ENCODE measurements at regions of chr2 and their contacts with region 1.

Region 1: GRCh38 chr2:1550658-1551316 is 137.5 kb downstream of the TPO start:
- DNase-seq: peak in 1 of 2 experiments; percentile 91
- H3K4me3 ChIP-seq: no peak overlapping the region
- H3K27ac ChIP-seq: no peak overlapping the region
- H3K4me1 ChIP-seq: no peaks in the 10 kb centered on the region
- H3K27me3 ChIP-seq: peaks cover 0 to 4% (median 3%) of the 10 kb centered on the region in 4 experiments; a peak in 3 of 7 replicates
- CTCF ChIP-seq: peak; percentile 85 to 94 (median 91)
- EP300 ChIP-seq: no peak
- POLR2A ChIP-seq: no peak
- RAD21 ChIP-seq: peak; percentile 71 to 81

Region 2: DNA sequence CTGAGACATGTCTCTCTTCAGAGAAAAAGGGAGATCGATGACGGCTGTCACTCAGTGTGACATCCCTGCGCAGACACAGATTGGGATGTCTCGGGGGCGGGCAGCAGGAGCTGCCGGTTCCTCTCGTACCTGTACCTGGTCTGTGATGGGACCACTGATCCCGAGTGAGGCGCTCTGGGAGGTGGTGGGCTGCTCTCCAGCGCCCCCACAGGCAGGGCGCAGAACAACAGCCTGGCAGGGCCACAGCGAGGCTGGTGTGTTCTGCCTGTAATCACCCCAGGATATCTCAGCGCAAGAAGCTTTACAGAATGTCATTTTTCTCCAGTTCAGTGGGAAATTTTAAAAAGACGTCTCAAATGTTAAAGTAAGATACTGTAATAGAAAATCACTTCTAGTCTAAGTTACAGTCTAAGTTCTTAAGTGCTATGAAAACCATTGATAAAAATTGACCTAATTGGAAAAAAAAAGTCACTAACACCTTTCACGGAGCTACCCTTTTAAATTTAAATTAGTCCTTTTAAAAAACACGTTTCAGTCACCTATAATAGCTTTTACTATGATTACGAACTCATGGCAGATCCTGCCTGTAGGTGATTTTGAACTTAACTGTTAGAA is 410.3 kb before region 1 on chr2:
- CTCF ChIA-PET with region 1: interaction called, 12 read pairs
- POLR2A ChIA-PET with region 1: no interaction called
- DNase-seq: peak; percentile 51 to 93
- H3K4me3 ChIP-seq: no peak overlapping the region
- H3K27ac ChIP-seq: no peak overlapping the region
- H3K4me1 ChIP-seq: no peaks in the 10 kb centered on the region
- H3K27me3 ChIP-seq: no peaks in the 10 kb centered on the region
- CTCF ChIP-seq: peak; percentile 92 to 97 (median 94)
- EP300 ChIP-seq: no peak
- POLR2A ChIP-seq: no peak
- RAD21 ChIP-seq: peak; percentile 69 to 71

Region 3: GRCh38 chr2:1246239-1246638 is 304.5 kb before region 1 on chr2:
- CTCF ChIA-PET with region 1: interaction called, 14 read pairs
- POLR2A ChIA-PET with region 1: no interaction called
- DNase-seq: no peak
- H3K4me3 ChIP-seq: no peak overlapping the region
- H3K27ac ChIP-seq: no peak overlapping the region
- H3K4me1 ChIP-seq: no peaks in the 10 kb centered on the region
- H3K27me3 ChIP-seq: no peaks in the 10 kb centered on the region
- CTCF ChIP-seq: peak; percentile 51 to 63 (median 56)
- EP300 ChIP-seq: no peak
- POLR2A ChIP-seq: no peak
- RAD21 ChIP-seq: peak; percentile 53 to 62

Region 4: DNA sequence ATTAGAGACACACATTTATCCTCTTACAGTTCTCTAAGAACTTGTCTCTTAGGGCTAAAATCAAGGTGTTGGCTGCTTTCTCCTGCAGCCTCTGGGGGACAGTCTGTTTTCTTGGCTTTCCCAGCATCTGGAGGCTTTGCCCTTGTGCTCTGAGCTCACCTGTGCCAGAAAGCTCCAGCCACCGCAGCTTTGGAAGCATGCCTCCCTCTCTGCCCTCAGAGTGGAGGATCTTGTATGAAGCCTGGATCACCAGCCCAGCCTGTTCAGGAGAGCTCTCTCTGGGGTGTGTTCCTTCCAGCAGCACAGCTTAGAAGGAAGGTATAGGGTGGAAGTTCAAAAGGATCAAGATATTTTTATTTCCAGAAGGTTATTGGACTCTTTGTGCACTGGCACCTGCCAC is 190.6 kb before region 1 on chr2:
- CTCF ChIA-PET with region 1: no interaction called
- POLR2A ChIA-PET with region 1: no interaction called
- DNase-seq: no peak
- H3K4me3 ChIP-seq: no peak overlapping the region
- H3K27ac ChIP-seq: no peak overlapping the region
- H3K4me1 ChIP-seq: peaks cover 0 to 2% (median 0%) of the 10 kb centered on the region in 4 experiments; a peak in 1 of 7 replicates
- H3K27me3 ChIP-seq: no peaks in the 10 kb centered on the region
- CTCF ChIP-seq: no peak
- EP300 ChIP-seq: no peak
- POLR2A ChIP-seq: no peak
- RAD21 ChIP-seq: no peak

Region 5: DNA sequence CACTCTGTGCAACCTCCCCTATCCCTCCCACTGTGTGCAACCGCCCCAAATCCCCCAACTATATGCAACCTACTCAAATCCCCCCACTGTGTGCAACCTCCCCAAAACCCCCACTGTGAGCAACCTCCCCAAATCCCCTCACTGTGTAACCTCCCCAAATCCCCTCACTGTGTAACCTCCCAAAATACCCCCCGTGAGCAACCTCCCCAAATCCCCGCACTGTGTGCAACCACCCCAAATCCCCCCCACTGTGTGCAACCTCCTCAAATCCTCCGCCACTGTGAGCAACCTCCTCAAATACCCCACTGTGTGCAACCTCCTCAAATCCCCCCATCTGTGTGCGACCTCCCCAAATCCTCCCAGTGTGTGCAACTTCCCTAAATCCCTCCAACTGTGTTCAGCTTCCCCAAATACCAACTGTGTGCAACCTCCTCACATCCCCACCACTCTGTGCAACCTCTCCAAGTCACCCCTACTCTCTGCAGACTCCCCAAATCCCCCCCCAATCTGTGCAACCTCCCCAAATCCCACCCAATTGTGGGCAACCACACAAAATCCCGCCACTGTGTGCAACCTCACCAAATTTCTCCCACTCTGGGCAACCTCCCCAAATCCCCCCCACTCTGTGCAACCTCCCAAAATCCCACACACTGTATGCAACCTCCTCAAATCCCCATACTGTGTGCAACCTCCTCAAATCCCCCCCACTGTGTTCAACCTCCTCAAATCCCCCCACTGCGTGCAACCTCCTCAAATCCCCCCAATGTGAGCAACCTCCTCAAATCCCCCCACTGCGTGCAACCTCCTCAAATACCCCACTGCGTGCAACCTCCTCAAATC is 23.4 kb before region 1 on chr2:
- CTCF ChIA-PET with region 1: no interaction called
- POLR2A ChIA-PET with region 1: no interaction called
- DNase-seq: no peak
- H3K4me3 ChIP-seq: no peak overlapping the region
- H3K27ac ChIP-seq: no peak overlapping the region
- H3K4me1 ChIP-seq: no peaks in the 10 kb centered on the region
- H3K27me3 ChIP-seq: no peaks in the 10 kb centered on the region
- CTCF ChIP-seq: no peak
- EP300 ChIP-seq: no peak
- POLR2A ChIP-seq: no peak
- RAD21 ChIP-seq: no peak

Region 6: GRCh38 chr2:1563943-1564891 is 13.4 kb after region 1 on chr2:
- CTCF ChIA-PET with region 1: interaction called, 14 read pairs
- POLR2A ChIA-PET with region 1: interaction called, 5 read pairs
- DNase-seq: no peak
- H3K4me3 ChIP-seq: no peak overlapping the region
- H3K27ac ChIP-seq: no peak overlapping the region
- H3K4me1 ChIP-seq: peaks cover 0 to 4% (median under 1%) of the 10 kb centered on the region in 4 experiments; a peak in 1 of 7 replicates
- H3K27me3 ChIP-seq: no peaks in the 10 kb centered on the region
- CTCF ChIP-seq: no peak
- EP300 ChIP-seq: no peak
- POLR2A ChIP-seq: no peak
- RAD21 ChIP-seq: no peak

Measured in H1 (cell line).